Endothelial cell of umbilical vein (primary cell): ENCODE measurements at regions of chr3 and their contacts with region 1.

Region 1: GRCh38 chr3:181210275-181210674 is 220.7 kb upstream of the DNAJC19 start:
- DNase-seq: peak; percentile 27
- H3K4me3 ChIP-seq: no peak overlapping the region
- H3K27ac ChIP-seq: no peak overlapping the region
- H3K4me1 ChIP-seq: no peaks in the 10 kb centered on the region
- H3K27me3 ChIP-seq: peaks cover 1 to 3% of the 10 kb centered on the region in 2 experiments
- CTCF ChIP-seq: peak; percentile 5 to 20
- POLR2A ChIP-seq: no peak

Region 2: DNA sequence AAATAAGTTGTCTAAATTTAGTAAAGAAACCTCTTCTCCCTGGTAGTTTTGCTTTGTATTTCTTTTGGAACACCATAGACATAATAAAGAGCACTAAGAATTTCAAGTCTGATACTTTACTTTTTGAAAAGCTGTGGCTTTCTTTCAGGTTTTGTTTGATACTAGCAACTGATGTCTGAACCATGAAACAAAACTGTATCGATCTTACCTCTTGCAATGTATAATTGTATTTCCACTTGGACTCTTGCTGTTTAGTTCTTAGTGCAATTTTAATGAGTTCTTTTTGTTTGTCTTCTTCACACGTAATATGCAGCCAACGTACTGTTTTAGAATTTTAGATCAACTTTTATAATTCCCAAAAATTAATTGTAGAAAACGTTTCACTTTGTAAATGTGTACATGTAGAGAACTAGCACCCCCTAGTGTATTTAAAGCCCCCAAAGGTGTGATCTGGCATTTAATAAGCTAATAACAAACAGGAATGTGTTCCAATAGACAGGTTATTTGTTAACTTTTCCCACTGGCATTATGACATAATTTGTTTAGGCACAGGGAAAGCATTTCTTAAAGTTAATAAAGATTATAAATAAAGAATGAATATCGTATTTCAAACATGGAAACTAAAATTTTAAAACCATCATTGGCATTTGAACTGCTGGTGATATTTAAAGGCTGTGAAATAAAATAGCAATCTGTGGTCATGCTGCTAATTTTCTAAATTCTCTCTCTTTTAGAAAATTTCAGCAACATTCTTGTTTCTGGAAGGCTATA is 68.4 kb after region 1 on chr3:
- CTCF ChIA-PET with region 1: interaction called, 34 read pairs
- POLR2A ChIA-PET with region 1: no interaction called
- dilution Hi-C with region 1: no loop called
- intact Hi-C with region 1: loop called (anchors 1 kb)
- DNase-seq: peak; percentile 6
- H3K4me3 ChIP-seq: no peak overlapping the region
- H3K27ac ChIP-seq: no peak overlapping the region
- H3K4me1 ChIP-seq: no peaks in the 10 kb centered on the region
- H3K27me3 ChIP-seq: peaks cover 0 to 4% of the 10 kb centered on the region in 2 experiments
- CTCF ChIP-seq: peak in 1 of 2 donors; percentile 7
- POLR2A ChIP-seq: no peak

Region 3: GRCh38 chr3:181326637-181327223 is 116.5 kb after region 1 on chr3:
- CTCF ChIA-PET with region 1: interaction called, 12 read pairs
- POLR2A ChIA-PET with region 1: no interaction called
- dilution Hi-C with region 1: no loop called
- intact Hi-C with region 1: no loop called
- DNase-seq: peak; percentile 54
- H3K4me3 ChIP-seq: no peak overlapping the region
- H3K27ac ChIP-seq: no peak overlapping the region
- H3K4me1 ChIP-seq: no peaks in the 10 kb centered on the region
- H3K27me3 ChIP-seq: no peaks in the 10 kb centered on the region
- CTCF ChIP-seq: peak; percentile 54 to 58
- POLR2A ChIP-seq: no peak

Region 4: DNA sequence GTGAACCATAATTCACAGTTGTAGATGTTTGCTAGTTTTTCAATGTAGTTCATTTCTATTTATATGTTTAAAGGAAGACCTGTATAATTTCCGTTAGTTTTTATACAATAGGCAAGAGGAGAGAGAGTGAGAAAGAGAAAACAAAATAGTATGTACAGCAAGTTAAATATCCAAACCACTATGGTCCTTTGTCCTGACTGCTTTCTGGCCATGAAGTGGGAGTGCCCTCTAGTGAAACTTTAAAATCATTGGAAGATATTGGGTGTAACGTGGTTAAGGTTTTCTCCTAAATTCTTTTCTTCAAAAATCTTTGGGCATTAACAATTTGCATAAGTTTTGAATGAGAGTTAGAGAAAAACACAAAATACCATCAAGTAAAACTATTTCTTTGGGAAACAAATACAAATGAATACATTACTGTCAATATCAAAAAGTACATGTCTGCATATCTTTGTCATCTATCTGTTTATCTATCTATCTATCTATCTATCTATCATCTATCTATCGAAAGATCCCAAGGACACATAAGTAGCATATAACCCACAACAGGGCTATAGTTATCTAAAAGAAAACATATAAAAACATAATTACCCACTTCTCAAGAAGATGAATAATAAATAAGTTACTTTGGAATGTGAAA is 1048.4 kb after region 1 on chr3:
- CTCF ChIA-PET with region 1: interaction called, 6 read pairs
- POLR2A ChIA-PET with region 1: no interaction called
- dilution Hi-C with region 1: no loop called
- intact Hi-C with region 1: loop called (anchors 5 kb)
- DNase-seq: peak; percentile 40
- H3K4me3 ChIP-seq: no peak overlapping the region
- H3K27ac ChIP-seq: no peak overlapping the region
- H3K4me1 ChIP-seq: no peaks in the 10 kb centered on the region
- H3K27me3 ChIP-seq: no peaks in the 10 kb centered on the region
- CTCF ChIP-seq: peak; percentile 22 to 37
- POLR2A ChIP-seq: no peak

Region 5: DNA sequence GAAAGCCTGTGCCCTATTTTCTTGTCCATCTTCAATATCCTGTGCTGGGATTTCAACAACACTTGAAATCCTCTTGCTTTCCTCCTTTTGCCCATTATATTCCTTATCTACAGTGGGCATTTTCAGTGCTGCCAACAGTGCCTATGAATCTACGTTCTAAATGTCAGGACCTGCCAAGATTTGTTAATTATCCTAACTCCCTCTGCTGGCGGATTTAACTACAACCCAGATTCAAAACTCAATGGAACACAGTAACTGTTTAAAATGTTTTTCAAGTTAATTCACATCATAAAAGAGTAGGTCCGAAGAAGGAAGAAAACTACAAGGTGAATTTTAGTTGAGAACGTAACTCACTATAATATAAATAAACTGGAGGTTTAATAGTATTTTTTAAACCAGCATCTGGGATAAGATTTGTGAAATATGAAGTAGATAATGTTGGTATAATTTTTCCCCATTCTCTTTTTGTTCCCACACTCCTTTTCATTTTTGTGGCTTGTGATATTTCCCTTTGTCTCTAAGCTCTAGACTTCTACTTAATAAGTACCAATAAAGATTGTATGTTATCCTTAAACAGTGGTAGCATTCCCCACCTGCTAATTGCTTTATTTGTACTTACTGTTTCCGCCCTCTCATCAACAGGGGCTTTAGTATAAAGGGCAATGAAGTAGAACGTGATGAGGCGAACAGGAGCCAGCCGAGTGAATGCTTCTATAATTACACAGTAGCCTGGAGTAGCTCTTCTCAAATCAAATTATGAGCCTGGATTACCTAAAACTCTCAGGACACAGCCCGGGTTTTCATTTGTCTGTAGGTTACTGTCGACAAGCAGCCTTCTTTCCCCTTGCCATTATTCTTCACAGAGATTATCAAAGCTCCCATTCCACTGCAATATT is 1280.6 kb after region 1 on chr3:
- CTCF ChIA-PET with region 1: interaction called, 5 read pairs
- POLR2A ChIA-PET with region 1: no interaction called
- dilution Hi-C with region 1: no loop called
- intact Hi-C with region 1: loop called (anchors 5 kb)
- DNase-seq: peak; percentile 54
- H3K4me3 ChIP-seq: no peak overlapping the region
- H3K27ac ChIP-seq: no peak overlapping the region
- H3K4me1 ChIP-seq: no peaks in the 10 kb centered on the region
- H3K27me3 ChIP-seq: no peaks in the 10 kb centered on the region
- CTCF ChIP-seq: peak; percentile 24 to 36
- POLR2A ChIP-seq: no peak